ENCODE measurements at regions of chr3 and their contacts with region 1.

Region 1: DNA sequence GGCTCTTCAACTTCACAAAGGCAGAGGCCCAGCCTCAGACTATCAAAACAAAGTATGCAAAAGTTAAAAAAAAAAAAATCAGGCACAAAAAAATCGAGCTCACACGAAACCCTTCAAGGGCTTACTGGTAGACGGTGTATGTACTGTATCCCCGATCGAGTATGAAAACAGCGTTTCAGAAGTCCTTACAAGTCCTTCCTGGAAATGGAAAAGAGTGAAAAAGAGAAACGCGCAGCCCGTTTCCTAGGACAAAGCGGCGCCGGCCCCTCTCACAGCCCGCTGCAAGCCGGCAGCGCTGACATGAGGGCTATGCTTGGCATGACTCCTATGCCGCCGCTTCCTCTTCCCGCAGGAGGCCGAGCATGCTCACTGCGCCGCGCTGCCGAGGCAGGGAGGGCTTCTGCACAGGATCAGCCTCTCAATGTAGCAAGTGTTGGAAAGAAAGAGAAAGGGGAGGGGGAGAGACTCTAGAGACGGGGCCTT is at the start of gene VGLL4:
- DNase-seq: peak; percentile 87
- H3K4me3 ChIP-seq: peak within 1 kb of the TSS; percentile 86
- H3K27ac ChIP-seq: peak within 1 kb of the TSS; percentile 83
- H3K4me1 ChIP-seq: peaks cover 27% of the 10 kb centered on the region
- CTCF ChIP-seq: peak; percentile 33; the same call in 1 of the 2 replicates
- total RNA-seq, gene VGLL4: 27.9 and 36.1 TPM in 2 replicates

Region 2: DNA sequence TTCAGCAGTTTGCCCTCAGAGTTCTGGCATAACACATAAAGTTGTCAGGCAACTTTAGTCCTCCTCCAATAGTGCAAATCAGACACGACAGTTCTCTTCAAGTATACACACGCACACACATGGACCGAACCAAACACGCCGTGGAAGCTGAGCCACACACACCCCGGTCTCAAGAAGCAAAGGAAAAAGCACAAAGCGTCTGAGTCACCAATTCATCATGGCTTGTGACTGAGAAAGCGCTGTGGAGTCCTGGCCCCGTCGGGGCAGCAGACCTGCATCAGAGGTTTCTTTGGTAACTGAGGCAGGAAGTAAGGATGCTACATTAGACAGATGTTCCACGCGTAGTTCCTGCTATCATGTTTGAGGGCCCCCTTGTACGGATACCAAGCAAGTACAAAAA is 85.6 kb before region 1 on chr3:
- CTCF ChIA-PET with region 1: no interaction called
- POLR2A ChIA-PET with region 1: interaction called, 3 read pairs
- intact Hi-C with region 1: loop called (anchors 2 kb)
- DNase-seq: no peak
- H3K4me3 ChIP-seq: no peak overlapping the region
- H3K27ac ChIP-seq: no peak overlapping the region
- H3K4me1 ChIP-seq: no peaks in the 10 kb centered on the region
- CTCF ChIP-seq: no peak

Region 3: DNA sequence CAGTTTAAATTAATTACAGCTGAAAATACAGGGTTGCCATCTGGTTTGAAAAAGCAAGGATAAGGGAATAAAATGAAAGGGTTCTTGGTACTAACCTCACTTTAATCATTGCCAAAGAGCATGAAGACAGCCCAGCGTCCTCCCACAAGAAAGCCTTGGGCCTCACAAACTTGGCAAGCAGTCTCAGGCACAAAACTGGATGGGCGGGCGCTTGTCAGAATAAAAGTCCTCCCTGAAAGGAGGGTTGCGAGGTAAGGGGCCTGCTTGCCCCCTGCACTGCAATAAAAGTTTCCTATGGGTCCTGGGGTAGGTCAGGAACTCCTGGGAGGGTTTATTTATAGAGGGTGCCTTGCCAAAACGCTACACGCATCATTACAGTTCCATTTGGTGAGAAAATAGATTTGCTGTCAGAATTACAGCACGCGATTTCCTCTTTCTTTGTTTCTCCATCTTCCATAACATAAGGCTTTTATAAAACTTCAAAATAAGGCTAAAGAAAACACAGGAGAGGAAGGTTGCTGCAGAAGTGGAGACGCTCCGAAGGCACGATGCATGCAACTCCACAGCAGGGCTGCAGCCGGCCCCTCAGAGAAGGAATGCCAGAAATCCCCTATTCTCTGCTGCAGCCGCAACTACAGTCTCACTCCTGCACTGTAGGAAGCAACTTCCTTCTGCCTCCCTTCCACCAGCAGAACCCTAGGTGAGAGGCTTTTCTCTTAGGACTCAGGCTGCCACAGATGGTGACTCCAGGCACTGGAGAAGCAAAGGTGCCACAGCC is 61.3 kb before region 1 on chr3:
- CTCF ChIA-PET with region 1: no interaction called
- POLR2A ChIA-PET with region 1: interaction called, 5 read pairs
- intact Hi-C with region 1: loop called (anchors 10 kb)
- DNase-seq: peak; percentile 31
- H3K4me3 ChIP-seq: peak overlapping the region; percentile 53
- H3K27ac ChIP-seq: peak overlapping the region; percentile 10
- H3K4me1 ChIP-seq: peaks cover 26% of the 10 kb centered on the region
- CTCF ChIP-seq: no peak

Region 4: DNA sequence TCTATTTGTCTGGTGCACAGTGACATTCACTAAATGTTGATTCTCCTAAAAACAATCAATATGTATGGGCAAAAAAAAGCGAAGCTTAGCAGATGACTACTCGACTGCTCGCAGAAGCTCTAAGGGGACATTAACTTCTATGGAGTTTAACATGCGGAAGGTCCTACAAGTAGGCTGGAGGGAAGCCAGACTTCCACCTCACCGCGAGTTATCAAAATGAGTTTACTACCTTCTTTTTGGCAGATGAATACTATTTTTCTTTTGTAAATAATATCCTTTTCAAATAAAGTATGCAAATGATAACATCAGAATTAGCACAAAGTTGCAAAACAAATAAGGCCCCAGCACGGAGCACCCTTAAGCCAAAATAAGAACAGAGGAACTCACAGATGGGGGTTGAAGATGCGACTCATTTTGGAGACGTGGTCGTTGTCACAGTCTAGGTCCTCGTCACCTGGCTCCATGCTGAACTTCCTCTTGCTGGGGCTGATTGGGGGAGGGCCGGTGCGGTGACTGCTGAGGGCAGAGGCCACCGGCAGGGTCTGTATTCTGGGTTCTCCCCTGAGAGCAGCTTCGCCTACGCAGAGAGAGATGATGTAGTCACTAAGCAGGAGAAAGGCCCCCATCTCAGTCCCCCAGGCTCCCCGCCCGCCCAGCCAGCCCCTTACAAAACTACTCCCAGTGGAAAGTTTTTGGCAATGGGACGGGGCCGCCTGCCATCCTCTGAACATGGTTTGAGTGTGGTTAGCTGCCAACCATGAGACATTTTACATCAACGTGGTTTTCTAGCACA is 42.0 kb before region 1 on chr3:
- CTCF ChIA-PET with region 1: no interaction called
- POLR2A ChIA-PET with region 1: interaction called, 7 read pairs
- intact Hi-C with region 1: loop called (anchors 1 kb)
- DNase-seq: peak; percentile 92
- H3K4me3 ChIP-seq: peak overlapping the region; percentile 52
- H3K27ac ChIP-seq: peak overlapping the region; percentile 91
- H3K4me1 ChIP-seq: peaks cover 77% of the 10 kb centered on the region
- CTCF ChIP-seq: no peak

Region 5: GRCh38 chr3:11719406-11720230 is 76.0 kb after region 1 on chr3:
- CTCF ChIA-PET with region 1: no interaction called
- POLR2A ChIA-PET with region 1: no interaction called
- intact Hi-C with region 1: loop called (anchors 1 kb)
- DNase-seq: peak; percentile 88
- H3K4me3 ChIP-seq: peak overlapping the region; percentile 75
- H3K27ac ChIP-seq: peak overlapping the region; percentile 90
- H3K4me1 ChIP-seq: peaks cover 27% of the 10 kb centered on the region
- CTCF ChIP-seq: no peak

Measured in OCI-LY7 (cell line).